ENCODE measurements at regions of chr15 and their contacts with region 1.

Region 1: DNA sequence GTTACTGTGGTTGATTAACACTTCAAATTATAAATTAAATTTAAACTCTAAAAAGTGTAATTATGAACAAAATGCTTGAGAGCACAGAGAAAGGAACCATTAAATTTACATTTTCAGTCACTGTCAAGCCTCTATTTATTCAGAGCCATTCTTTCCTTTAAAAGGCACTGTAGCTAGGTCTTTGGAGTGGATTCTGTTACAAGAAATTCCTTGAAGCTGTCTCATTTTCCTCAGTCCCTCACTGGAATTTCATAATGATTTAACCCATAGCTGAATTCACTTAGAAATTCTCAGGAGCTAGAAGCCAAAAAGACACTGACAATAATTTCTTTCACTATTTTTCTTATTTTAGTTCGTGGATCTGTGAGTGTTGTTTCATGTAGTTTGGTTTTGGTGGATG is 81.2 kb upstream of the TCF12 start:
- DNase-seq: no peak
- ATAC-seq: no peak
- H3K4me3 ChIP-seq: no peak overlapping the region
- H3K27ac ChIP-seq: no peak overlapping the region
- H3K4me1 ChIP-seq: peaks cover 14% of the 10 kb centered on the region
- H3K27me3 ChIP-seq: no peaks in the 10 kb centered on the region
- CTCF ChIP-seq: no peak

Region 2: GRCh38 chr15:56659197-56659596 is 178.1 kb before region 1 on chr15:
- intact Hi-C with region 1: no loop called
- DNase-seq: no peak
- ATAC-seq: no peak
- H3K4me3 ChIP-seq: no peak overlapping the region
- H3K27ac ChIP-seq: no peak overlapping the region
- H3K4me1 ChIP-seq: no peaks in the 10 kb centered on the region
- H3K27me3 ChIP-seq: no peaks in the 10 kb centered on the region
- CTCF ChIP-seq: no peak

Region 3: GRCh38 chr15:56765251-56765650 is 72.0 kb before region 1 on chr15:
- intact Hi-C with region 1: loop called in 1 of 2 experiments (anchors 2 kb)
- DNase-seq: no peak
- ATAC-seq: no peak
- H3K4me3 ChIP-seq: no peak overlapping the region
- H3K27ac ChIP-seq: no peak overlapping the region
- H3K4me1 ChIP-seq: peaks cover 18% of the 10 kb centered on the region
- H3K27me3 ChIP-seq: no peaks in the 10 kb centered on the region
- CTCF ChIP-seq: no peak

Region 4: DNA sequence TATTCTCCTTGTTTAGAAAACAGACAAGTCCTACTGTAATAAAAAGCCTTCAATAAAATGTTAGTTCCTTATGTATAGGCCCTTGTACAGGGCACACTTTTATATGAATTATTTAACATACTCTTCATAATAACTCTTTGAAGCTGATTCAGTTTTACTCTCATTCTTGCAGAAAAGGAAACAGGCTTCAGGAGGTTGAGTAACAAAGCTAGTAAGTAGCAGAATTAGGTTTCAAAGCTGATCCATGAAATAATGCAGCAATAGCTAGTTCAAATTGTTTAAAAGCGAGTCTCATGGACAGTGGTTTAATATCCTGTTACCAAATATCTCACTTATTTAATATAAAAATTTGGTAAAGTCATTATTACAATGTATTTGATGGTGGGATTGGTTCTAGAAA is 106.1 kb after region 1 on chr15:
- intact Hi-C with region 1: no loop called
- DNase-seq: no peak
- ATAC-seq: no peak
- H3K4me3 ChIP-seq: no peak overlapping the region
- H3K27ac ChIP-seq: no peak overlapping the region
- H3K4me1 ChIP-seq: peaks cover 31% of the 10 kb centered on the region
- H3K27me3 ChIP-seq: no peaks in the 10 kb centered on the region
- CTCF ChIP-seq: no peak

Measured in psoas muscle (tissue), 8 donors.